Astrocyte of the cerebellum (primary cell): ENCODE measurements at regions of chr12 and their contacts with region 1.

Region 1: GRCh38 chr12:92987362-92987761 is 58.3 kb upstream of the EEA1 start:
- DNase-seq: peak; percentile 70
- H3K4me3 ChIP-seq: no peak overlapping the region
- CTCF ChIP-seq: peak; percentile 41

Region 2: DNA sequence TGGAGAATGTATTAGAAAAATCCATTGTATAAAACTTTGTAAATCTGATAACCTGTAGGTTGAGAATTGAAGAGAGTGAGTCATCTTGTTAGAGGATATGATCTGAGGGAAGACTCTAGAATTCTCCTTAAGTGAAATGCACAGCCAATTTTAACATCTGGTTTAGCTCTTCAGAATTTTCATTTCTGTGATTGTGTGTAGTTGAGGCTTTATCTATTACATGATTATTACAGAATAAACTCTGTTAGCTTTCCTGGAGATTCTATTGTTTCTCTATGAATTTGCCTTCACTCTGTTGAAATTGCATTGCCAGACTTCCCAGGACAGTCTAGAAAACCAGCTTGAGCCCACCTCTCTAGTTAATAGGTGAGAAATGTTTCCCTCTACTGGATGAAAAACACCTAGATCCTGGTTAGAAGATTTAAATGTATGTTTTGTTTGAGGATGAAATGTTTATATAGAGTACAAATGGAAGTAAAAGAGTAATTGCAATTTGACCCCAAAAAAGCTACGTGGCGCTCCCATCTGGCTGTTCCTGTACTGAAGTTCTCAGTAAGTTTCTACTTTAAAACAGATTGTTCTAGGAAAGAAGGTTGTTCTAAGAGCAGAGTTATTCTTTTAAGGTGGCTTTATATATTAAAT is 393.2 kb after region 1 on chr12:
- in situ Hi-C with region 1: loop called (anchors 5 kb)
- DNase-seq: no peak
- H3K4me3 ChIP-seq: peak overlapping the region; percentile 63
- CTCF ChIP-seq: peak; percentile 45